Posterior cingulate gyrus (tissue), 11 donors: ENCODE measurements at regions of chr1 and their contacts with region 1.

Region 1: GRCh38 chr1:205325334-205325884 is 3.9 kb upstream of the NUAK2 start:
- DNase-seq: peak in 5 of 10 donors; percentile 69 to 91 (median 71)

Region 2: DNA sequence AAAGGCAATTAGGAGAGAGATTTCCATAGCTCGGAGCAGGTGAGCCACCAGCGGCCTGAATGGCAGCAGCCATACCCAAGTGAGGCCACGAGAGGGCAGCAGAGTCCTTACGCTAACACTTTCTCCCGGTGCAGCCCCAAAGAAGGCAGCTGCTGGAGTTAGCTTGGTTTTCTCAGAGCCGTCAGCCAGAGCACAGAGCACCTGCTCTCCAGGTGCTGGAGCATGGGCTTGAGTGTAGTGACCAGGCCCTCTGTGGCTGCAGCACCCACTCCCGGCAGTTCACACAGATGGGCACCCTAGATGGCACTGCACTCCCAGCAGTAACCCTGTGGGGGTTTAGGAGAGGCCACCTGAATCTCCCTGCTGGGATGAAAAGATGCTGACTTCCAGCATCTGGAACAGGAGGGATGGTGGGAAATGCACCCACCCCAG is 51.8 kb before region 1 on chr1:
- intact Hi-C with region 1: loop called (anchors 1 kb)
- DNase-seq: peak; percentile 80 to 98 (median 91)

Region 3: DNA sequence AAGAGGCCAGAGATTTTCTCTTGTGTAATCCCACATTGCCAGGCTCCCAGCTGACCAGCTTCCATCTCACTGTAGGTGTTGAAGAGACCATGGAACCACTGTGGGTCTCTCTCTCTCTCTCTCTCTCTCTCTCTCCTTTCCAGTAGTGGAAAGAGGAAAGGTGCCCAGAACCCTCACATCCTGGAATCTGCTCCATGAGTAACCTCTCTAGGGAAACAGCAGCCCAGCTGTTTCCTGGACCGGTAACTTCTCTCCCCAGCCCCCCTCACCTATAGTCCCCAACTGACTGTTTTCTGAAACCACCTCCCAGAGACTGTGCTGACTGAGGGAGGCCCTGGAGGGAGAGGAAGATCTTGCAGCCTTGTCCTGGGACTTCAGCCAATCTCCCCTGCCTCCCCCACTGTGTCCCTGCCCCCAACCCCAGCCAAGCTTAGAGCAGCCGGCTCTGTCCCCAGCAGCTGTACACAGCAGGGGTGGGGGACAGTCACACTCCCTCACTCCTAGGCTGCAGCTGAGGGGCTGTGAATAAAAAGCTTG is 375.5 kb after region 1 on chr1:
- intact Hi-C with region 1: no loop called
- DNase-seq: peak in 3 of 10 donors; percentile 16 to 48 (median 39)